ENCODE measurements at regions of chr10 and their contacts with region 1.

Region 1: GRCh38 chr10:43105102-43105785 is 28.4 kb downstream of the RET start:
- DNase-seq: peak; percentile 83
- H3K4me3 ChIP-seq: peak overlapping the region; percentile 67
- H3K27ac ChIP-seq: no peak overlapping the region
- H3K4me1 ChIP-seq: no peaks in the 10 kb centered on the region
- H3K27me3 ChIP-seq: 0 out of 2 replicates have a peak, but pooled peaks cover 5% of the 10 kb centered on the region

Region 2: DNA sequence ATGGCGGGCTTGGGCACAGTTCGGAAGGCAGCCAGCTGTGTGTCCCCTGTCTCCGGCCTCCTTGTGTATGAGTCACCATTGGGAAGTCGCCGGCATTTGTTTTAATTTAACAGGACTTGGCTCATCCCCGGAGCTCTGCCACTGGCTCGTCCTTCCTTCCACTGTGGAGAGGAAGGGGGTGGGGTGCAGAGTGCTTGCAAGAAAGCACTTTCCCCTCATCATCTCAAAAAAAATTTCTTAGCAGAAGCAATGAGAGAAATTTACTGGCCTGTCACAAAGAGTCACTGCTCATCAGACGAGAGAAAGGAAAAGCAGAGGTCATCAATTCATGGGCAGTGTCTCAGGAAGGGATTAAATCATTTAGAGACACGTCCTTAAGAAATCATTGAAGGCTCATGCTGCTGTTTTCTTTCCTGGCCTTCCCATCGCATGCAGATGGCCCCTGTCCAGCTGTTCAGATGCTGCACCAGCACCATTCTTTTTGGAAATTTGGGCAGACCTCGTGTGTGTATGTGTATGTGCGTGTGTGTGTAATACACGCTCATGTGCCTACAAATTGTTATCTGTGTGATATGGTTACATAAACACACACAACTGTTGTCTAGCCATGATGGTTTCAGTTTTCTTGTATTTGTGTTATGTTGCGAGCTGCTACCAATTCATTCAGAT is 229.3 kb before region 1 on chr10:
- in situ Hi-C with region 1: loop called (anchors 10 kb)
- DNase-seq: peak; percentile 59
- H3K4me3 ChIP-seq: no peak overlapping the region
- H3K27ac ChIP-seq: no peak overlapping the region
- H3K4me1 ChIP-seq: no peaks in the 10 kb centered on the region
- H3K27me3 ChIP-seq: no peaks in the 10 kb centered on the region; the same call in 1 of the 2 replicates

Region 3: GRCh38 chr10:42888504-42889095 is 216.6 kb before region 1 on chr10:
- in situ Hi-C with region 1: no loop called
- DNase-seq: peak; percentile 10
- H3K4me3 ChIP-seq: no peak overlapping the region
- H3K27ac ChIP-seq: no peak overlapping the region
- H3K4me1 ChIP-seq: no peaks in the 10 kb centered on the region
- H3K27me3 ChIP-seq: no peaks in the 10 kb centered on the region

Region 4: DNA sequence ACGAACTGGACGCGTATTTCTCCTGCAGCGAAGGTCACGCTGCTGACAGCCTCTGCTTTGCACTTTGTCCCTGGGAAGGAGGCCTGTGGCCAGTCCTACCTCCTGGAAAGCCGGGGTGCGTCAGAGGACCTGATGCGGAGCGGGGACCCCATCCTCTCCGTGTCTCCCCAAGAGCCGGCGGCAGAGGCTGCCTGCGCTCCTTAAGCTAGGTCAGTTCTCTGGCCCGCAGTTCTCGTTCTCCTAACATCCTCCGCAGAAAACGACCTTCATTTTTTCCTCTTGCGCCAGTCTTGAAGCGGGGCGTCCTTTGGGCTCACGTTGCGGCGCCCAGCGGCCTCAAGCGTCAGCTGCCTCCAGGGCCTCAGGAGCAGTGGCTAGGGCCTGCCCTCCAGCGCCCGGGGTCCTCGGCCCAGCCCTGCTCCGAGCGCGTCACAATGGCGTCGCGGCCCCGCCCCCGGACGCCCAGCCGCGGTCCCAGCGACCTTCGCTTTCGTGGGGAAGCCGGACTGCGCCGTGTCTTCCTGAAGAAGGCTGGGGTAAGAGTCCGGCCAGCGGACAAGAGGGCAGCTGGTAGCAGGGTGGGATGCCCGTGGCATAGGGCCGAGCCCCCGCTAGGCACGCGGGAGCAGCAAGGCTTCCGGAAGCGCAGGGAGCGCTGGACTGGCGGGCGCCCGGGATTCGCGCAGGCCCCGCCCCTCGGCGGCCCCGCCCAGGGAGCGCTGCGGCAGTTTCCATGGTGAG is 331.3 kb after region 1 on chr10 and contains the start of gene ZNF487:
- in situ Hi-C with region 1: no loop called
- DNase-seq: peak; percentile 95
- H3K4me3 ChIP-seq: peak within 1 kb of the TSS; percentile 89
- H3K27ac ChIP-seq: peak within 1 kb of the TSS; percentile 99
- H3K4me1 ChIP-seq: peaks cover 3% of the 10 kb centered on the region; the same call in 1 of the 2 replicates
- H3K27me3 ChIP-seq: no peaks in the 10 kb centered on the region
- total RNA-seq, gene ZNF487: 6.3 and 11.0 TPM in 2 replicates